Activated CD8-positive, alpha-beta T cell treated with anti-CD3 and anti-CD28 coated beads, Interleukin-2, amount 10 ng/mL, durations not matched to agents 7 days and 5 days (primary cell): ENCODE measurements at regions of chr12 and their contacts with region 1.

Region 1: GRCh38 chr12:121637231-121637914 is 11.0 kb downstream of the ORAI1 start:
- DNase-seq: peak; percentile 81
- ATAC-seq: peak; percentile 74
- H3K4me3 Mint-ChIP-seq: peak overlapping the region; percentile 52
- H3K27ac Mint-ChIP-seq: peak overlapping the region; percentile 88
- H3K4me1 Mint-ChIP-seq: peaks cover 73% of the 10 kb centered on the region
- H3K27me3 Mint-ChIP-seq: no peaks in the 10 kb centered on the region

Region 2: DNA sequence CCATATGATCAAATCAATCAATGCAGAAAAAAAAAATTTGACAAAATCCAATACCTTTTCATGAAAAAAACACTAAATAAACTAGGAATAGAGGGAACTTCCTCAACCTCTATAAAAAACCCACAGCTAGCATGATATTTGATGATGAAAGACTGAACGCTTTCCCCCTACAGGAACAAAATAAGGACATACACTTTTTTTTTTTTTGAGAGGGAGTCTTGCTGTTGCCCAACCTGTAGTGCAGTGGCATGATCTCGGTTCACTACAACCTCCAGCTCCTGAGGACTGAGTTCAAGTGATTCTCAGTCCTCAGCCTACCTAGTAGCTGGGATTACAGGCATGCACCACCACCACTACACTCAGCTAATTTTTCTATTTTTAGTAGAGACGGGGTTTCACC is 322.9 kb before region 1 on chr12:
- CTCF ChIA-PET with region 1: no interaction called
- POLR2A ChIA-PET with region 1: no interaction called
- DNase-seq: no peak
- ATAC-seq: no peak
- H3K4me3 Mint-ChIP-seq: no peak overlapping the region
- H3K27ac Mint-ChIP-seq: peak overlapping the region; percentile 55
- H3K4me1 Mint-ChIP-seq: peaks cover 23% of the 10 kb centered on the region
- H3K27me3 Mint-ChIP-seq: no peaks in the 10 kb centered on the region

Region 3: DNA sequence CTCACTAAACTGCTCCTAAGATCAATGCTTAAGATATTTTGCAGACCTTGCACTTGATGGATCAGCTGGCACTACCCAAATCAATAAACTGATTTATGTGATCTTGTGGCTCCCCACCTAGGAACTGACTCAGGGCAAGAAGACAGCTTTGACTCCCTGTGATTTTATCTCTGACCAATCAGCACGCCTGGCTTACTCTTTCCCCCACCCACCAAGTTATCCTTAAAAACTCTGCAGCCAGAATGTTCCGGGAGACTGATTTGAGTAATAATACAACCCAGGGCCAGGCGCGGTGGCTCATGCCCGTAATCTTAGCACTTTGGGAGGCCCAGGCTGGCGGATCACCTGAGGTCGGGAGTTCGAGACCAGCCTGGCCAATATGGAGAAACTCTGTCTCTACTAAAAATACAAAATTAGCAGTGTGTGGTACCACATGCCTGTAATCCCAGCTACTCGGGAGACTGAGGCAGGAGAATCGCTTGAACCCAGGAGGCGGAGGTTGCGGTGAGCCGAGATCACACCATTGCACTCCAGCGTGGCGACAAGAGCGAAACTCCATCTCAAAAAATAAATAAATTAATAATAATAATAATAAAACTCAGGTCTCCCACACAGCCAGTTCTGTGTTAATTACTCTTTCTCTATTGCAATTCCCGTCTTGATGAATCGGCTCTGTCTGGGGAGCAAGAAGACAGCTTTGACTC is 20.1 kb after region 1 on chr12:
- CTCF ChIA-PET with region 1: interaction called, 6 read pairs
- POLR2A ChIA-PET with region 1: interaction called, 11 read pairs
- DNase-seq: no peak
- ATAC-seq: no peak
- H3K4me3 Mint-ChIP-seq: no peak overlapping the region
- H3K27ac Mint-ChIP-seq: peak overlapping the region; percentile 95
- H3K4me1 Mint-ChIP-seq: peaks cover 74% of the 10 kb centered on the region
- H3K27me3 Mint-ChIP-seq: no peaks in the 10 kb centered on the region